ENCODE measurements at regions of chr2 and their contacts with region 1.

Region 1: DNA sequence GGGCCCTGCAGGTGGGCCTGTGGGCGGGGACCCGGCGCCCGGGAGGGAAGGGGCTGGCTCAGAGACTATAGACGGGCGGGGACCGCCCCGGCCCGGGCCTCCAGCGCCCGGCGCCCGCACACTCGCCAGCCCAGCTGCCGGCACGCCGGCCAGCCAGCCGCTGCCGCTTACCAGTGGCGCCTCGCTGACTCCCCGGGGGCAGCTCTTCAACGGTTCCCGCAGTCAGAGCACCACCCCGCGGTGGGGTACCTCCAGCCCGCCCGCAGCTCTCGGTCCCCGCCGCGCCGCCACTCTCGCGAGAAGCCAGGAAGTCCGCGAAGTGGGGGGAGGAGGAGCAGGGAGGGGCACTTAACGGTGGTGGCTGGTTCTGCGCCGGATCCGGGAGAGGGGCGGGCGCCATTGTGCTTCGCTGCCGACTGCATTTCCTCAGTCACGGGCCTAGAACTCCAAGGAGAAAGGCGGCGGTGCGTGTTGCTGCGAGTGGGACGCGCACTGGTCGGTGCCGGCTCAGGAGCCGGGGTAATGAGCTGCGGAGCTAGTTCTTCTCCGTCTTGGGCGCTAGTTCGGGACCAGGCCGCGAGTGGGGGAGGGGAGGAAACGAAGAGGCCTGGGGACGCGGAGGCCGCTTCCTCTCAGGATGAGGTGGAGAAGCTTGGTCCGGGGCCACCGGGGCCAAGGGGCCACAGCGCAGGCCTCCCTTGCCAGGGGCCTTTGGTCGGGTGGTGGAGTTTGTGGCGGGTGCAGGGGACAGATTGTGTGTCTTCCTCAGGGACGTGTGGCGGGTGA is at the start of gene MARCHF7:
- DNase-seq: peak; percentile 95 to 98 (median 96)
- ATAC-seq: peak; percentile 88
- H3K4me3 ChIP-seq: peak within 1 kb of the TSS; percentile 89
- H3K4me3 Mint-ChIP-seq: peak within 1 kb of the TSS; percentile 100
- H3K27ac ChIP-seq: peak within 1 kb of the TSS; percentile 93 to 98
- H3K27ac Mint-ChIP-seq: peak within 1 kb of the TSS; percentile 94
- H3K4me1 ChIP-seq: peaks cover 31% of the 10 kb centered on the region
- H3K4me1 Mint-ChIP-seq: peaks cover 66% of the 10 kb centered on the region
- H3K27me3 ChIP-seq: no peaks in the 10 kb centered on the region
- H3K27me3 Mint-ChIP-seq: no peaks in the 10 kb centered on the region
- CTCF ChIP-seq: peak; percentile 22
- total RNA-seq, gene MARCHF7: 58.1 to 61.4 TPM

Region 2: GRCh38 chr2:159516241-159516766 is 196.0 kb before region 1 on chr2:
- CTCF ChIA-PET with region 1: interaction called, 6 read pairs
- POLR2A ChIA-PET with region 1: interaction called, 26 read pairs
- intact Hi-C with region 1: loop called (anchors 5 kb)
- DNase-seq: peak in 8 of 14 experiments; percentile 3 to 84 (median 15)
- ATAC-seq: peak; percentile 98
- H3K4me3 ChIP-seq: peak overlapping the region; percentile 63
- H3K4me3 Mint-ChIP-seq: peak overlapping the region; percentile 79
- H3K27ac ChIP-seq: peak overlapping the region; percentile 58 to 75
- H3K27ac Mint-ChIP-seq: peak overlapping the region; percentile 88
- H3K4me1 ChIP-seq: peaks cover 4% of the 10 kb centered on the region
- H3K4me1 Mint-ChIP-seq: peaks cover 30% of the 10 kb centered on the region
- H3K27me3 ChIP-seq: no peaks in the 10 kb centered on the region
- H3K27me3 Mint-ChIP-seq: no peaks in the 10 kb centered on the region
- CTCF ChIP-seq: no peak

Region 3: DNA sequence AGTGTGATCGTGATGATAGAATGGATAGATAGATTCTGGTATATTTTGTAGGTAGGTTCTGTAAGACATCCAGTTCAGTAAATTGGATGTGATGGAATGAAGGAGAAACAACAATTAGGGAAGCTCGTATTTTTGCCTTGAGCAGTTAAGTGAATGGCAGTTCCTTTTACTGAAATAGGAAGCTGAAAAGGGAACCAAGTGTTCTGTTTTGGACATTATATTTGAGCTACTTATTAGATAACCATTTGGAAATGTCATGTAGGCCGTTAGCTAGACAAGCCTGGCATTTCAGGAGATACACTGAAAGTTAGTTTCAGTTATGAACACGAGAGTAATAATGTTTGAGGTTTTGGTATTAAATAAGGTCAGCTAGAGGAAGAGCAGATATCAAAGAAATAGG is 41.5 kb after region 1 on chr2:
- CTCF ChIA-PET with region 1: interaction called, 3 read pairs
- POLR2A ChIA-PET with region 1: interaction called, 4 read pairs
- intact Hi-C with region 1: loop called in 1 of 2 experiments (anchors 5 kb)
- DNase-seq: no peak
- ATAC-seq: no peak
- H3K4me3 ChIP-seq: no peak overlapping the region
- H3K4me3 Mint-ChIP-seq: no peak overlapping the region
- H3K27ac ChIP-seq: no peak overlapping the region
- H3K27ac Mint-ChIP-seq: no peak overlapping the region
- H3K4me1 ChIP-seq: no peaks in the 10 kb centered on the region
- H3K4me1 Mint-ChIP-seq: peaks cover 26% of the 10 kb centered on the region
- H3K27me3 ChIP-seq: no peaks in the 10 kb centered on the region
- H3K27me3 Mint-ChIP-seq: no peaks in the 10 kb centered on the region
- CTCF ChIP-seq: no peak

Region 4: GRCh38 chr2:160493227-160494028 is 781.1 kb after region 1 on chr2 and contains the start of gene RBMS1:
- CTCF ChIA-PET with region 1: no interaction called
- POLR2A ChIA-PET with region 1: no interaction called
- intact Hi-C with region 1: loop called in 1 of 2 experiments (anchors 5 kb)
- DNase-seq: peak; percentile 25 to 79 (median 47)
- ATAC-seq: peak; percentile 51
- H3K4me3 ChIP-seq: peak within 1 kb of the TSS; percentile 66
- H3K4me3 Mint-ChIP-seq: peak within 1 kb of the TSS; percentile 98
- H3K27ac ChIP-seq: peak within 1 kb of the TSS; percentile 65 to 90
- H3K27ac Mint-ChIP-seq: peak within 1 kb of the TSS; percentile 88
- H3K4me1 ChIP-seq: peaks cover 12% of the 10 kb centered on the region
- H3K4me1 Mint-ChIP-seq: peaks cover 58% of the 10 kb centered on the region
- H3K27me3 ChIP-seq: no peaks in the 10 kb centered on the region
- H3K27me3 Mint-ChIP-seq: no peaks in the 10 kb centered on the region
- CTCF ChIP-seq: no peak
- total RNA-seq, gene RBMS1: 88.6 to 90.3 TPM